HEK293T (cell line): ENCODE measurements at regions of chr6 and their contacts with region 1.

Region 1: DNA sequence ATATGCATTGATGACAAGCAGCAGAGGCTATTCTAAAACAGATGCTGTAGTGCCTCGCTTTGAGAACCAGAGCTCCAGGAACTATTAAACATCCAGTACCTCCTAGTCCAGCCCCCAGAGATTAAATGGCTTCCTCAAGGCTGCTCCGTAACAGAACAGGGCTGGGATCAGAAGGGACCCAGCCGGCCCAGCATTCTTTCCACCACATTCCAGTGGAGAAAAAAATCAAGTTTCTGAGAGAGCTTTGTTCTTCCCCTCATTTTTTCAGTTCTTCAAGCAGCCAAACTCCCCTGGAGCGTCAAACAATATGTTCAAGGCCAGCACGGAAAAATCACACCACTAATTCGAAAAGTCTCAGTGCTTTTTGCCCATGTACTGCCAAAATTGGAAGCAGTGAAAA is 5.8 kb upstream of the STMND1 start:
- DNase-seq: no peak

Region 2: GRCh38 chr6:16286148-16286522 is 810.0 kb before region 1 on chr6:
- CTCF ChIA-PET with region 1: interaction called, 10 read pairs
- POLR2A ChIA-PET with region 1: no interaction called
- DNase-seq: peak; percentile 79